ENCODE measurements at regions of chr9 and their contacts with region 1.

Region 1: GRCh38 chr9:33473643-33474352 is at the start of gene NOL6:
- DNase-seq: peak; percentile 99
- H3K4me3 Mint-ChIP-seq: peak within 1 kb of the TSS; percentile 95
- H3K27ac Mint-ChIP-seq: peak within 1 kb of the TSS; percentile 93
- H3K4me1 Mint-ChIP-seq: peaks cover 29% of the 10 kb centered on the region
- H3K27me3 Mint-ChIP-seq: no peaks in the 10 kb centered on the region
- total RNA-seq, gene NOL6: 38.2 to 38.6 TPM

Region 2: DNA sequence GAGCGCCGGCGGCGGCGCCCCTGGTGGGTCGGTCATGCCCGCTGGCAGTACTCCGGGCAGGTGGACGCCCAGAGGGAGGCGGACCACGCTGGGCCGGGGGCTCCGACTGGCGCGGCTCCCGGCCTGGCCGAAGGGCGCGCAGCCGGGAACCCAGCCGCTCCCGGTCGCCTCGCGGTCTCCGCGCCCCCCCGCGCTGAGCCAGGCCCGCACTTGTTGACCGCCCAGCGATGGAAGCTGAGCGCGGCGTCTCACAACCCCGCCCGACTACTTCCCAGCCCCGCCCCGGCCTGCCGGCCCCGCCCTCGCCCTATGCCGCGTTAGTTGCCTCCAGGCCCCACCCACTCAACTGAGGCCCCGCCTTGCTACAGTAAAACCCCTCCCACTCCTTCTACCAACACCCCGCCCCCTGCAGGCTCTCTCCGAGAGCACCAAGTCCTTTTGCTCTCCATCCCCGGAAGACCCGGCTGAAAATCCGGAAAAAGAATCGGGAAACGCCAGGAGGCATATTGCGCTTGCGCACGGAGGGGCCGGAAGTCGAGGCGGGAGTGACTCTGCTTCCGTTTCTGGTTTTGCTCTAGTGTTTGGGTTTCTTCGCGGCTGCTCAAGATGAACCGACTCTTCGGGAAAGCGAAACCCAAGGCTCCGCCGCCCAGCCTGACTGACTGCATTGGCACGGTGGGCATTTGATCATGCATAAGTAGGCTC is 209.2 kb before region 1 on chr9 and contains the starts of genes BAG1 and CHMP5:
- CTCF ChIA-PET with region 1: interaction called, 3 read pairs
- intact Hi-C with region 1: loop called (anchors 1 kb)
- DNase-seq: peak; percentile 100
- H3K4me3 Mint-ChIP-seq: peak within 1 kb of the TSS; percentile 94
- H3K27ac Mint-ChIP-seq: peak within 1 kb of the TSS; percentile 98
- H3K4me1 Mint-ChIP-seq: peaks cover 47% of the 10 kb centered on the region
- H3K27me3 Mint-ChIP-seq: no peaks in the 10 kb centered on the region
- total RNA-seq, gene BAG1: 38.1 to 40.5 TPM
- total RNA-seq, gene CHMP5: 151 to 162 TPM

Region 3: DNA sequence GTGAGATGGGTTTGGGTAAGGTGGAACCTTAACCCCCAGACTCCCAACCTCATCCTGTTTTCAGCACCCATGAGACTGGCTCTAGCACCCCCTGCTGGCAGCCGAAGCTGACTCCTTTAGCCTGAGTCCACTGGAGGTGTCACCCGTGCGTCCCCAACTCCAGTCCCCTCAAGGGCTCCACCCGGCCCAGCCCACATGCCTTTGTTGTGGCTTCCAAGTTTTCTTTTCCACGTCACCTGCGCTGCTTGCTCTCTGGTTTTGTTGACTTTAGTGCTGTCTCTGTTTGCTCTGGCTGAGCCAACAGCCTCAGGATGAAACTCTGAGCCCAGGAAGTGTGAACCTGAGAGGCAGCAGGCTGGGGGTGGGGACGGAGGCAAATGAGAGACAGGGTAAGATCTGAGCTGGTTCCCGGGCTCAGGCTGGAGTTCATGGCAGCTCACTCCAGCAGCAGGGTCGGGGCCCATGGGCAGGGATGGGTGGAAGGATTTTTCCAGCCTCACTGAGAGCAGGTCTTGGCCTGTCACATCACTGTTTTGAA is 58.2 kb before region 1 on chr9:
- CTCF ChIA-PET with region 1: interaction called, 18 read pairs
- intact Hi-C with region 1: loop called (anchors 1 kb)
- DNase-seq: peak; percentile 98
- H3K4me3 Mint-ChIP-seq: no peak overlapping the region
- H3K27ac Mint-ChIP-seq: peak overlapping the region; percentile 89
- H3K4me1 Mint-ChIP-seq: peaks cover 43% of the 10 kb centered on the region
- H3K27me3 Mint-ChIP-seq: no peaks in the 10 kb centered on the region

Region 4: DNA sequence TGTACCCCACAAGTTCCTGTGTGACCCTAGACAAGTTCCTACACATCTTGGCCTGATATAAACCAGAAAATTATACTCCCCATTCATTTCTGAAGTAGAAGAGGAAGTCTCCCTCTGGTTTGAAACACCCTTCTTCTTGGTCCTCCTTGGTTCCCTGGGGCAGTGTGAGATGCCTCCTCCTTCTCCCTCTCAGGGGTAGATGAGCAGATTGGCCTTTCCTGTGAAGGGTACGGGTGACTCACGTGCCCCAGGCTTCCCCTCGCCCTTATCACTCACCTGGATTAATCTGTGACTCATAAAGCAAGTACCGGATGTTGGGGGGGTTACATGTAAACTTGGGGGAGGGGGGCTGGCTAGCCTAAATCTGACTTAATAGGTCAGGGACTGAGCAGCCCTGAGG is 15.4 kb before region 1 on chr9:
- CTCF ChIA-PET with region 1: interaction called, 159 read pairs
- intact Hi-C with region 1: loop called (anchors 1 kb)
- DNase-seq: peak; percentile 76
- H3K4me3 Mint-ChIP-seq: no peak overlapping the region
- H3K27ac Mint-ChIP-seq: peak overlapping the region; percentile 90
- H3K4me1 Mint-ChIP-seq: peaks cover 54% of the 10 kb centered on the region
- H3K27me3 Mint-ChIP-seq: no peaks in the 10 kb centered on the region

Region 5: DNA sequence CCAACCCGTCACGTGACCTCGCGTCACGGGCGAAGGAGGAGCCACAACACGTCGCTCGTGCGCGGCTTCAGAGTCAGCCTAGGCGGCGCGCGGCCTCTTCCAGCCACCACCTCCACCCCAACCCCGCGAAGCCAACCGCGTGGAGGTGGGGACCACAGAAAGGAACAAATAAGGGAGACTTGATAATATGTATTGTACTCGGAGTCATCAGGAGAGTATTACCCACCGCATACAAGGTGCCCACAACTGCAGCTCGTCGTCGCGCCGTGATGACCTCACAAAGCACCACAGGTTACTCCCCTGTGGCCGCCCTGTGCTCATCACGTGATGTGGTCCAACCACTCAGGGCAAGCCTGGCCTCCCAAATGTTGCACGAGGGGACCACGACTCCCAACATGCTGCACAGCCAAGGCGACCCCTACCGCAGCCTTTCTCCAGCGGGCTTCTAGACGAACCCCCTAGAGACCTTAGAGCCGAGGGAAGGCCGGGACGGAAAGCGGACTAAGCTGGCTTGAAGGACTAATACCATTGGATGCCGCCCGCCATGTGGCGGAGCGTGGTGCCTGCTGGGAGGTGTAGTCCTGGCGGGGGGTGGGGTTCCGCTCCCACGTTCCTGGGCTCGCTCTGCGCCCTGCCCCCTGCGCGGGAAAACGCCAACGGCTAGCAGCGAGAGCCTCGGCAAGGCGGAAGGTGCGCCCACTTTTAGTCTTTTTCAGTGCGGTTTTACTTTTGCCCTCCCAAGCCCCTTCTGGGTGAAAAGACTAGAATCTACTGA is 575.3 kb after region 1 on chr9:
- CTCF ChIA-PET with region 1: no interaction called
- intact Hi-C with region 1: loop called (anchors 10 kb)
- DNase-seq: peak; percentile 98
- H3K4me3 Mint-ChIP-seq: peak overlapping the region; percentile 91
- H3K27ac Mint-ChIP-seq: peak overlapping the region; percentile 98
- H3K4me1 Mint-ChIP-seq: peaks cover 33% of the 10 kb centered on the region
- H3K27me3 Mint-ChIP-seq: no peaks in the 10 kb centered on the region